ENCODE measurements at regions of chr6 and their contacts with region 1.

Region 1: DNA sequence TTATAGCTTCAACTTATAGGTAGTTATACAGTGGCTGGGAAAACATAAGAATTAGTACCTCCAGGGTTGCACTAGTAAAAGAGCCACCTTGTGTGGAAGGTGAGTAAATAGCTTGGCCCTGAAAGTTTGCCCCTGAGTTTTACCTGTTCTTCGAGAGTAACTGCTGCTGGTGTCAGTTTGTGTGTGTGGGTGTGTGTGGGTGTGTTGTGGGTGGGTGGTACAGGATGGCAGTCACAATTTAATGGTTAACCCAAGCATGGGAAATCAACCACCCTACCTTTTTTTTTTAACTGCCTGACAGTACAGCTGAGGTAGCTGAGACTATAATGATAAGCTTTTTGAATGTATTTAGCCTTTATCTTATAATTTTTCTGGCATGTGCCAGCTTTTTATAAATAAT is 137.3 kb downstream of the STXBP5 start:
- DNase-seq: no peak
- CTCF ChIP-seq: no peak

Region 2: GRCh38 chr6:147331401-147331800 is 10.1 kb before region 1 on chr6:
- CTCF ChIA-PET with region 1: interaction called, 16 read pairs
- POLR2A ChIA-PET with region 1: no interaction called
- DNase-seq: no peak
- CTCF ChIP-seq: no peak

Region 3: DNA sequence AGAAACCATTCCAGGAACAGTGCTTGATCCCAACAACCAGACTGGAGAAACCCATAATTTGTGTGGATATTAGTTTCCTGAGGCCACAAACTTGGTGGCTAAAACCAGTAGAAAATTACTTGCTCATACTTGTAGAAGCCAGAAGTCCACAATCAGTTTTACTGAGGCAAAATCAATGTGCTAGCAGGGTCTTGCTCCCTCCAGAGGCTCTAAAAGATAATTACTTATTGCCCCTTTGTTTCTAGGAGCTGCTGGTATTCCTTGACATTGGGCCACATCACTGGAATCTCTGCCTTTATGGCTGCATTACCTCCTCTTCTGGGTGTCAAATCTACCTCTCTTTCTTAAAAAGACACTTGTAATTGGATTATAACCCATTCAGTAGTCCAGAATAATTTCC is 24.8 kb after region 1 on chr6:
- CTCF ChIA-PET with region 1: no interaction called
- POLR2A ChIA-PET with region 1: no interaction called
- DNase-seq: no peak
- CTCF ChIP-seq: no peak

Measured in GM10248 (cell line).